Caco-2 (cell line): ENCODE measurements at regions of chr7 and their contacts with region 1.

Region 1: DNA sequence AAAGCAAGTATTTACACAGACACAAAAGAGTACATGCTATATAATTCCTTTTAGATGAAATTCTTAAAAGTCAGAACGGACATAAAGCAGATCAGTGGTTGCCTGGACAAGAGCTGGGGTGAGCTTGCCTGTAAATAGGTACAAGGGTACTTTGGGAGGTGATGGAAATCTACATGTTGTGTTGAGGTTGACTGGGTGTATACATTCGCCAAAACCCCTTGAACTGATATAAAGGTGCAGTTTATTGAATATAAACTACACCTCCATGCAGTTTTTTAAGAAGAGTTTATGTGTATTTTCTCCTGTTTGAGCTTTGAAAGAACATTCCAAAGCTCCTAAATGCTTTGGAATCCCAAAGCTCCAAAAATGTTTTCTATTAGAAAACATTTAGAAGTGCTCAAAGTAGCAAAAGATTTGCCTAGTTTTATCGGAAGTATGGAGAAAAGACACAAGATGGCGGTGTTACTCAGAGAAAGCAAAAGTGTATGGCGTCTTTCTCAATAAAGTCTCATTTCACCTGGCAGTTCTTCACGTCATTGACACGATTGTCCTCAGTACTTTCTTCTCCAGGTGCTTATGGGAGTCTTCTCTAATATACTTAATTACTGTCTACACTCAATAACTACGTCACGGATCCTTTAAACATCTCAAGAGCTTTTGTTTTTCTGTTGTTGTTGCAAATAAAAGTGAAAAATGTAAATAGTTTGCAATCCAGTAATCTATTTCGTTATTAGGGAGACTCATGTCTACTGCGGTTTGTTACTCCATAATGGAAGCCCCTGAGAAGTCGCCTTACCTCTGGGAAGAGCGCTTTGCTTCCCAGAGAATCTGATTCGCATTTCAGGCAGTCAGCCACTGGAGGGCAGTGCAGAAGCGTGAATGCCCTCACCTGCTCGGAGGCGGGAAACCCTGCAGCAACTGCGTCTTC is 14.7 kb upstream of the SEC61G start:
- DNase-seq: peak; percentile 88 to 89
- H3K4me3 ChIP-seq: peak overlapping the region; percentile 28
- H3K4me3 Mint-ChIP-seq: peak overlapping the region; percentile 70
- H3K27ac Mint-ChIP-seq: peak overlapping the region; percentile 77
- H3K4me1 ChIP-seq: no peaks in the 10 kb centered on the region
- H3K4me1 Mint-ChIP-seq: no peaks in the 10 kb centered on the region
- H3K27me3 ChIP-seq: no peaks in the 10 kb centered on the region
- H3K27me3 Mint-ChIP-seq: peaks cover 18% of the 10 kb centered on the region
- CTCF ChIP-seq: peak; percentile 80 to 92

Region 2: GRCh38 chr7:54689394-54690049 is 84.2 kb before region 1 on chr7:
- CTCF ChIA-PET with region 1: no interaction called
- POLR2A ChIA-PET with region 1: no interaction called
- intact Hi-C with region 1: no loop called
- DNase-seq: no peak
- H3K4me3 ChIP-seq: no peak overlapping the region
- H3K4me3 Mint-ChIP-seq: no peak overlapping the region
- H3K27ac Mint-ChIP-seq: no peak overlapping the region
- H3K4me1 ChIP-seq: no peaks in the 10 kb centered on the region
- H3K4me1 Mint-ChIP-seq: no peaks in the 10 kb centered on the region
- H3K27me3 ChIP-seq: no peaks in the 10 kb centered on the region
- H3K27me3 Mint-ChIP-seq: peaks cover 10% of the 10 kb centered on the region
- CTCF ChIP-seq: no peak

Region 3: GRCh38 chr7:54839538-54840213 is 65.9 kb after region 1 on chr7:
- CTCF ChIA-PET with region 1: no interaction called
- POLR2A ChIA-PET with region 1: no interaction called
- intact Hi-C with region 1: loop called (anchors 1 kb)
- DNase-seq: peak; percentile 56 to 74
- H3K4me3 ChIP-seq: no peak overlapping the region
- H3K4me3 Mint-ChIP-seq: no peak overlapping the region
- H3K27ac Mint-ChIP-seq: no peak overlapping the region
- H3K4me1 ChIP-seq: no peaks in the 10 kb centered on the region
- H3K4me1 Mint-ChIP-seq: no peaks in the 10 kb centered on the region
- H3K27me3 ChIP-seq: no peaks in the 10 kb centered on the region
- H3K27me3 Mint-ChIP-seq: peaks cover 5% of the 10 kb centered on the region
- CTCF ChIP-seq: peak; percentile 44 to 81

Region 4: GRCh38 chr7:55018361-55019190 is 244.8 kb after region 1 on chr7 and contains the start of gene EGFR:
- CTCF ChIA-PET with region 1: no interaction called
- POLR2A ChIA-PET with region 1: no interaction called
- intact Hi-C with region 1: loop called (anchors 5 kb)
- DNase-seq: peak; percentile 79 to 83
- H3K4me3 ChIP-seq: peak within 1 kb of the TSS; percentile 86
- H3K4me3 Mint-ChIP-seq: peak within 1 kb of the TSS; percentile 81
- H3K27ac Mint-ChIP-seq: peak within 1 kb of the TSS; percentile 59
- H3K4me1 ChIP-seq: peaks cover 32% of the 10 kb centered on the region
- H3K4me1 Mint-ChIP-seq: peaks cover 16% of the 10 kb centered on the region
- H3K27me3 ChIP-seq: no peaks in the 10 kb centered on the region
- H3K27me3 Mint-ChIP-seq: no peaks in the 10 kb centered on the region
- CTCF ChIP-seq: no peak
- total RNA-seq, gene EGFR: 55.1 and 60.1 TPM in 2 replicates

Region 5: GRCh38 chr7:55179931-55180661 is 406.4 kb after region 1 on chr7:
- CTCF ChIA-PET with region 1: no interaction called
- POLR2A ChIA-PET with region 1: no interaction called
- intact Hi-C with region 1: loop called (anchors 2 kb)
- DNase-seq: peak in 1 of 2 experiments; percentile 9
- H3K4me3 ChIP-seq: no peak overlapping the region
- H3K4me3 Mint-ChIP-seq: peak overlapping the region; percentile 68
- H3K27ac Mint-ChIP-seq: peak overlapping the region; percentile 92
- H3K4me1 ChIP-seq: peaks cover 70% of the 10 kb centered on the region
- H3K4me1 Mint-ChIP-seq: peaks cover 44% of the 10 kb centered on the region
- H3K27me3 ChIP-seq: no peaks in the 10 kb centered on the region
- H3K27me3 Mint-ChIP-seq: no peaks in the 10 kb centered on the region
- CTCF ChIP-seq: no peak

Region 6: GRCh38 chr7:55365675-55366460 is 592.1 kb after region 1 on chr7:
- CTCF ChIA-PET with region 1: no interaction called
- POLR2A ChIA-PET with region 1: no interaction called
- intact Hi-C with region 1: loop called (anchors 10 kb)
- DNase-seq: peak; percentile 95 to 97
- H3K4me3 ChIP-seq: peak overlapping the region; percentile 73
- H3K4me3 Mint-ChIP-seq: peak overlapping the region; percentile 98
- H3K27ac Mint-ChIP-seq: peak overlapping the region; percentile 99
- H3K4me1 ChIP-seq: no peaks in the 10 kb centered on the region; the same call in 1 of the 2 replicates
- H3K4me1 Mint-ChIP-seq: peaks cover 18% of the 10 kb centered on the region
- H3K27me3 ChIP-seq: no peaks in the 10 kb centered on the region
- H3K27me3 Mint-ChIP-seq: no peaks in the 10 kb centered on the region
- CTCF ChIP-seq: peak; percentile 17 to 29